ENCODE measurements at regions of chr14 and their contacts with region 1.

Region 1: GRCh38 chr14:69580009-69580577 is 5.4 kb upstream of the CCDC177 start:
- DNase-seq: peak; percentile 91
- H3K4me3 ChIP-seq: no peak overlapping the region
- H3K27ac ChIP-seq: no peak overlapping the region
- H3K27me3 ChIP-seq: peaks cover 22% of the 10 kb centered on the region
- CTCF ChIP-seq: peak; percentile 82

Region 2: DNA sequence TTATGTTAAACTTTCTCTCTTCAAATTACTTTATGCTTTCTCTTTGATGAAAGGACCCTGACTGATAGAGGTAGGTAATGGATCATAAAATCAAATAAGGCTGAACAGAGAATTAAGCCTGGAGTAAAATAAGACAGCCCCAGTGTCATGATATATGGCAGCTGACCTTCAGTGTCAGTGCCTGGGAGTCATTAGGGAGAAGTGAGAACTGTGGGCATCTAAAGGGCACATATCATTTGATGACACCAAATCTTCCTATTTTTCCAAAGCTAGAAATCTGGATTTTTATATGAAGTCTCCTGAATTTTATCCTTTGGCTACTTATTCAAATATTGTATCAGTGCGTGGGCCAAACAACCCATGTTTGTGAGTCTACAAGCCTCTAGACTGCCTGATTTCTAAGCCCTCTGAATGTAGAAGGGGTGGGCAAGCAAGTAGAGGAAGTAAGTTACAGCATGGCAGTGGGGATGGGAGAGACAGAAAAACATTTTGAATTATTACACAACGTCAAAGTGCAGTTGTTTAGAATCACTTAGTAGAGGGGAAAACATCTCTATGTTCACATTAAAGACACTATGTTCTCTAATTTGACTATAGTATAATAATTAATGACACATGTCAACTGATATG is 171.6 kb before region 1 on chr14:
- CTCF ChIA-PET with region 1: no interaction called
- POLR2A ChIA-PET with region 1: no interaction called
- DNase-seq: no peak
- H3K4me3 ChIP-seq: no peak overlapping the region
- H3K27ac ChIP-seq: no peak overlapping the region
- H3K27me3 ChIP-seq: no peaks in the 10 kb centered on the region
- CTCF ChIP-seq: no peak

Region 3: DNA sequence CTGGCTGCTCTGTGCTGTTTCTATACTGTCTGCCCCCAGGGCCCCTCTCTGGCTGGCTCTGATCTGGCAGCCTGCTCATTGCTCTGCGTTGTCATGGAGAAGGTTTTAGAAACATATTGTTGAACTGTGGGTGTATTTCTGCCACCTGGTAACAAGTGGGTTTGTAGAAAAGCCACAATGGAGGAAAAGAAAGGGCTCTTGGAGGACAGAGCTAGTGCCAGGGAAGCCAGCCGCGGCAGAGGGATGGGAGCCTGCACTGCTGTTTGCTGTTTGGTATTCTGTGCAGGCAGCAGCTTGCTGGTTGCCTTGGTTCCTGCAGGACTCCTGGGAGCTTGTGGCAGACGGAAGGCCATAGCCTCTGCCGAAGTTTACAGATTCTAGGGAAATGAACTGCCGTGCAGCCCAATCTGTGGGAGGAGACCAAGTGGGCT is 20.5 kb before region 1 on chr14:
- CTCF ChIA-PET with region 1: interaction called, 18 read pairs
- POLR2A ChIA-PET with region 1: no interaction called
- DNase-seq: no peak
- H3K4me3 ChIP-seq: no peak overlapping the region
- H3K27ac ChIP-seq: no peak overlapping the region
- H3K27me3 ChIP-seq: peaks cover 43% of the 10 kb centered on the region
- CTCF ChIP-seq: no peak

Region 4: GRCh38 chr14:69726761-69727511 is 146.8 kb after region 1 on chr14:
- CTCF ChIA-PET with region 1: interaction called, 115 read pairs
- POLR2A ChIA-PET with region 1: no interaction called
- DNase-seq: peak; percentile 30
- H3K4me3 ChIP-seq: peak overlapping the region; percentile 50
- H3K27ac ChIP-seq: no peak overlapping the region
- H3K27me3 ChIP-seq: no peaks in the 10 kb centered on the region
- CTCF ChIP-seq: peak; percentile 97

Region 5: GRCh38 chr14:70780396-70781075 is 1200.4 kb after region 1 on chr14:
- CTCF ChIA-PET with region 1: no interaction called
- POLR2A ChIA-PET with region 1: no interaction called
- DNase-seq: no peak
- H3K4me3 ChIP-seq: no peak overlapping the region
- H3K27ac ChIP-seq: no peak overlapping the region
- H3K27me3 ChIP-seq: peaks cover 2% of the 10 kb centered on the region
- CTCF ChIP-seq: no peak

Measured in AG04450 (cell line).